Dorsolateral prefrontal cortex (tissue), 120 donors: ENCODE measurements at regions of chr5 and their contacts with region 1.

Region 1: DNA sequence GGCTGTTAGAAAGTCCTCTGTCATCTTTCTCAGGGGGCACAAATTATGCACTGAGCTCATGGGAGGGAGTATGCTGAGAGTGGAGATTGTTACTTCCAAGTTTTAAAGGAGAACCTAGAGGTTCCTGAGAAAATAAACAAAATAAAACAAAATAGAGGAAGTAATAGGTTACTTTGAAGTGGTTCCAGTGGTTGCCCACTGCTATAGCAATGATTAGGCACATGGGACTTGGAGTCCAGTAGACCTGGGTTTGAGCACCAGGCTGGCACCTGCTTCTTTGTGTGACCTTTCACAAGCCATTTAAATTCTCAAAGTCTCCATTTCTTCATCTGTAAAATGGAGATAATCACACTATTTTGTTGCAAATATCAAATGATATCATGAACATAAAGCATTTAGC is 13.8 kb upstream of the CDC23 start:
- DNase-seq: no peak
- H3K4me3 ChIP-seq: no peak overlapping the region
- H3K27ac ChIP-seq: no peak overlapping the region
- H3K27me3 ChIP-seq: peaks cover 0 to 3% (median 0%) of the 10 kb centered on the region in 45 donors
- CTCF ChIP-seq: no peak

Region 2: DNA sequence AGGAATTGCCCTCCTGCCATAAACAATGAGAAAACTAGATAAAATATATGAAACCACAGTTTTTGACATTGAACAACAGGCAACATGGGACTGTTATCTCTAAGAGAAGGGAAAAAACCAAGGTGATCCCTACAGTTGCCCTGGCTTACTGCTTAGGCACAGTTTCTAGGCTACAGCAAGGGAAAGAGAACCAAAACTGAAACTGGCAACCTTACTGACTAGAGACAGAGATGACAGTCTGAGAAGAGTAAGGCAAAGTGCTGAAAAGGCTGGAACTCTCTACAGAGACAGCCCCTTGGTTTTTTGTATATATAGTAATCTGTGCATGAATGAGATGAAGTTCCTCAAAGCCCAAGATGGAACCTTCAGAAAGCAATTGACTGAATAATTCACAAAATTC is 175.7 kb after region 1 on chr5:
- intact Hi-C with region 1: no loop called
- DNase-seq: no peak
- H3K4me3 ChIP-seq: no peak overlapping the region
- H3K27ac ChIP-seq: peak overlapping the region in 14 of 59 donors; percentile 8 to 80 (median 44)
- H3K27me3 ChIP-seq: no peaks in the 10 kb centered on the region
- CTCF ChIP-seq: no peak

Region 3: DNA sequence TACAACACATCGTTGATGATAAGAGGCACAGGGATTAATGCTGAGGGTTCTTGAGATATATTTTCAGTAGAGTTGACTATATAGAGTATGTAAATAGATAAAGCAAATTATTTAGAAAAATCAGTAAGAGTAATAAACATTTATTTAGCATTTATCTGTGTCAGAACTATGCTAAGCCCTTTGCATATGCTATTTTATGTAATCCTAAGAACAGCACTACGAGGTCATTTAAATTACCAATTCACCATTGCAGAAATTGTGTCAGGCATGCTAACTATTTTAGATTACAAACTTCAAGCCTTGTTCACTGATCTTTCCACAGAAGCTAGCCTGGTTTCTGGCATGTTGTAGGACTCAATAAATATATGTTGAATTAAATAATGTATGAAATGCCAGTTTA is 191.5 kb after region 1 on chr5:
- intact Hi-C with region 1: loop called in 1 of 2 experiments (anchors 10 kb)
- DNase-seq: no peak
- H3K4me3 ChIP-seq: no peak overlapping the region
- H3K27ac ChIP-seq: no peak overlapping the region
- H3K27me3 ChIP-seq: no peaks in the 10 kb centered on the region
- CTCF ChIP-seq: no peak